CD14-positive monocyte (primary cell): ENCODE measurements at regions of chr13 and their contacts with region 1.

Region 1: DNA sequence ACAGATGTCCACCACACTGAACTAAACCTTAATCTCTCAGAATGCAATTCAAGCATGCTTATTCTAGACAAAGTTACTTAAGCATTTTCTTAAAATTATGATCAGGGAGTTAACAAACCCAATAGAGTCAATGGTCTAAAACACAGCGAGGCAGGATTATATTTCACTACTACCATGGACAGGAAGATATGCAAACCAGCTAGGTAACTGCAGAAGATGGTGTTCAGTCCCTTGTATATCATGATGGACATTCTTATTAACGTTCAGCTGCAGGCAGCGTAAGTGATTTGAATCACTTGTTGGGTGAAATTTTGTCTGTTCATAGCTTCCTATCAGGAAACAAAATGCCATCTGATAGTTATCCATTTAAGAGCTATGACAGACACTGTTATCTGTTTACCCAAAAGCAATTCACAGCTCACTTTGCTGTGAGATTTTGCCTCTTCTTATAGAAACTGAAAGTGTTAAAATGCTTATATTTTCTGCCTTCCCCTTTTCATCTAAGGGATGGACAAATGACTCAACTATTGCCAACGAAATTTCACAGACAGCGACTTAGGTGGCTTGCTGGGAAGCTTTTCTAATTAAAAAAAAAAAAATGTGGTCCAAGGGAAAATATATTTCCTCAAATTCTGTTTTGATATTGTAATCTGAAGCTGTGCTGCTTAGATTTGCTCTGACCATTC is 591.9 kb downstream of the DACH1 start:
- DNase-seq: peak; percentile 46 to 59 (median 57)
- H3K4me3 ChIP-seq: peak overlapping the region in 1 of 3 experiments; percentile 49
- H3K4me3 Mint-ChIP-seq: peak overlapping the region in 1 of 2 donors; percentile 35
- H3K27ac ChIP-seq: peak overlapping the region in 1 of 2 donors; percentile 60
- H3K27ac Mint-ChIP-seq: peak overlapping the region in 3 of 7 donors; percentile 31 to 80 (median 60)
- H3K4me1 ChIP-seq: peaks cover 3 to 11% of the 10 kb centered on the region in 2 donors
- H3K4me1 Mint-ChIP-seq: peaks cover 10% of the 10 kb centered on the region
- H3K27me3 ChIP-seq: no peaks in the 10 kb centered on the region
- H3K27me3 Mint-ChIP-seq: no peaks in the 10 kb centered on the region
- CTCF ChIP-seq: no peak

Region 2: DNA sequence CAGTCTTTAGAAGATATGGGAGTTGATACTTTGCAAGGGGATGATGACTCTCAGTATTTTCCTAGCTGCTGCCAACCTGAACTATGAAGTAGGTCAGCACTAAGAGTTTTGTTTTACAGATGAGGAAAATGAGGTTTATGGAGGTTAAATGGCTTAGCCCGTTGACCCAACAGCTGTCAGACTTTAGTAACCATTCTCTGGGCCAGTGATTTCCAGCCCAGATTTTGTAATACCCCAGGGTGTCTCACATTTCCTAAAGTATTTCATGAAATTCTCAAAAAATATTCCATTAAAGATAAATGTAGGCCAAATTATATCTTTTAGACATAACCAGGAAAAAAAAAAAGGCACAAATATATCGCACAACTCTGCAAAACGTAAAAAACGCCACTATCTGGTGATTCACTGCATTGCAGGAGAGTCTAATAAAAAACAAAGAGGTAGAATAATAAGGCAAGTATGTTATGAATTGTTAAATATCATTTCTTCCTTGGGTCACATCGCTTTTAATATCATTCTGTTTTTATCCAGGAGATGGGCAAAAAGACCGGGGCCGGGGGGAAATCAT is 479.4 kb after region 1 on chr13:
- intact Hi-C with region 1: loop called in 1 of 2 experiments (anchors 5 kb)
- DNase-seq: no peak
- H3K4me3 ChIP-seq: no peak overlapping the region
- H3K4me3 Mint-ChIP-seq: no peak overlapping the region
- H3K27ac ChIP-seq: no peak overlapping the region
- H3K27ac Mint-ChIP-seq: no peak overlapping the region
- H3K4me1 ChIP-seq: no peaks in the 10 kb centered on the region
- H3K4me1 Mint-ChIP-seq: no peaks in the 10 kb centered on the region
- H3K27me3 ChIP-seq: no peaks in the 10 kb centered on the region
- H3K27me3 Mint-ChIP-seq: no peaks in the 10 kb centered on the region
- CTCF ChIP-seq: no peak